ENCODE measurements at regions of chr11 and their contacts with region 1.

Region 1: GRCh38 chr11:67317205-67317887 is 14.0 kb downstream of the SSH3 start:
- DNase-seq: peak; percentile 99
- H3K4me3 ChIP-seq: peak overlapping the region; percentile 78
- H3K27ac ChIP-seq: peak overlapping the region; percentile 93
- H3K4me1 ChIP-seq: peaks cover 13% of the 10 kb centered on the region
- CTCF ChIP-seq: peak; percentile 89

Region 2: DNA sequence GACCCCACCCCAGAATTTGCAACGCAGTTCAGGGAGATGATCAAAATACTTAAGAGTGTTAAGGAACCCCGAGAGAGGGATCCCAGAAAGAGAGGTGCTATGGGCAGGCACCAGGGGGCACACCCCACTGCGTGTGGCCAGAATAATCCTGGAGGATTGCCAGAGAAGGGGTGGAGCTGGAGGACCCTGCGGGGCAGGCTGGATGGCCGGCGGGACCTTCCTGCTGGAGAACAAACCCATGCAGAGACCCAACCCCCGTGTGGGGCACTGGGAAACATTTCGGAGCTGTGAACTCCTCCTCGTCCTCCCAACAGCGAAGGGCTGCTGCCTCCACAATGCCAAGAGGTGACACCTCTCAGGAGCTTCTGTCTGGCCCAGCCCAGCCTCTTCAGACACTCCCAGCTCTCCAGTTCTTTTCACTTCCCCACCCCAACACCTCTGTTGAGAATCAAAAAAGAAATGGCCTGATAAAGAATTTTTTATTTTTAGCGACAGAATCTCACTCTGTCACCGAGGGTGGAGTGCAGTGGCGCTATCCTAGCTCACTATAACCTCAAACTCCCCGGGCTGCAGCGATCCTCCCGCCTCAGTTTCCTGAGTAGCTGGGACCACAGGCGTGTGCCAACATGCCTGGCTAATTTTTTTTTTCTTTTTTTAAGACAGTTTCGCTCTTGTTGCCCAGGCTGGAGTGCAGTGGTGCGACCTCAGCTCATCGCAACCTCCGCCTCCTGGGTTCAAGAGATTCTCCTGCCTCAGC is 235.1 kb before region 1 on chr11:
- CTCF ChIA-PET with region 1: no interaction called
- POLR2A ChIA-PET with region 1: interaction called, 3 read pairs
- intact Hi-C with region 1: loop called (anchors 1 kb)
- DNase-seq: no peak
- H3K4me3 ChIP-seq: no peak overlapping the region
- H3K27ac ChIP-seq: no peak overlapping the region
- H3K4me1 ChIP-seq: peaks cover 12% of the 10 kb centered on the region
- CTCF ChIP-seq: no peak

Region 3: DNA sequence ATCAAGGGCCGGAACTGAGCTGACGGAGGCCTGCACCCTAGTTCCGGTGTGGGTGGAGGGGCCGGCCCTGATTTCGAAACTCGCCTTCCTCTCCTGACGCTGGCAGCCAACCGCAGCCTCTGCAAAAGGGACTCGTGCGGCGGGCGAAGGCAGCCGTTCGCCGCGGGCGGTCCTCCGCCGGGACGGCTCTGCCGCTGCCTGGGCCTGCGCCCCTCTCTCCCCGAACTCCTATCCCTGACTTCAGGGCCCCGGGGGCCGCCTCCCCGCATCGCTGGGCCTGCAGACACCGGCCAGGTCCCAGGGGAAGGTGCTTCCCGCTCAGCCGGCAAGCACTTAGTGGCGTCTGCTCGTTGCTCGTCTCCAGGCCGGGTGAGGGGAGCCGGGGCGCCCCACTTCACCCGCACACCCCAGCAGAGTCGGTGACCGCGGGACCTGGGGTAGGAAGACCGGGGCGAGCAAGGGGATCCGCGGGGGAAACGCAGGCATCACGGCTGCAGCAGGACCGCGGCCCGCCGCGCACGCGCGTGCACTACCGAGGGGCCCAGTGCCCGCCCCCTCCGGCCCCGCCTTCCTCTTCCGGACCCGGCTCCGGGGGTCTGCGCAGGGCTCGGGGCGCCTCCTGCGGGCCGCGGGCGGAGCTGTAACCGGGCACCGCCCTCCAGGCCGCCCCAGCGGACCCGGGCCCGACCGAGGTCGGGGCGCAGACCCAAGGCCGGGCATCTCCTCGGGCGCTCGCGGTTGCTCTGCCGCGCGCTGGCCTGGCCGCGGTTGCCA is 28.7 kb before region 1 on chr11:
- CTCF ChIA-PET with region 1: interaction called, 3 read pairs
- POLR2A ChIA-PET with region 1: no interaction called
- intact Hi-C with region 1: loop called (anchors 1 kb)
- DNase-seq: peak; percentile 94
- H3K4me3 ChIP-seq: peak overlapping the region; percentile 68
- H3K27ac ChIP-seq: peak overlapping the region; percentile 94
- H3K4me1 ChIP-seq: peaks cover 47% of the 10 kb centered on the region
- CTCF ChIP-seq: peak; percentile 67

Region 4: GRCh38 chr11:67523556-67524479 is 206.5 kb after region 1 on chr11:
- CTCF ChIA-PET with region 1: no interaction called
- POLR2A ChIA-PET with region 1: no interaction called
- intact Hi-C with region 1: no loop called
- DNase-seq: no peak
- H3K4me3 ChIP-seq: no peak overlapping the region
- H3K27ac ChIP-seq: no peak overlapping the region
- H3K4me1 ChIP-seq: no peaks in the 10 kb centered on the region
- CTCF ChIP-seq: no peak

Region 5: GRCh38 chr11:67780056-67780455 is 462.7 kb after region 1 on chr11:
- CTCF ChIA-PET with region 1: no interaction called
- POLR2A ChIA-PET with region 1: no interaction called
- intact Hi-C with region 1: no loop called
- DNase-seq: no peak
- H3K4me3 ChIP-seq: no peak overlapping the region
- H3K27ac ChIP-seq: no peak overlapping the region
- H3K4me1 ChIP-seq: no peaks in the 10 kb centered on the region
- CTCF ChIP-seq: no peak